Psoas muscle (tissue), 8 donors: ENCODE measurements at regions of chr1 and their contacts with region 1.

Region 1: DNA sequence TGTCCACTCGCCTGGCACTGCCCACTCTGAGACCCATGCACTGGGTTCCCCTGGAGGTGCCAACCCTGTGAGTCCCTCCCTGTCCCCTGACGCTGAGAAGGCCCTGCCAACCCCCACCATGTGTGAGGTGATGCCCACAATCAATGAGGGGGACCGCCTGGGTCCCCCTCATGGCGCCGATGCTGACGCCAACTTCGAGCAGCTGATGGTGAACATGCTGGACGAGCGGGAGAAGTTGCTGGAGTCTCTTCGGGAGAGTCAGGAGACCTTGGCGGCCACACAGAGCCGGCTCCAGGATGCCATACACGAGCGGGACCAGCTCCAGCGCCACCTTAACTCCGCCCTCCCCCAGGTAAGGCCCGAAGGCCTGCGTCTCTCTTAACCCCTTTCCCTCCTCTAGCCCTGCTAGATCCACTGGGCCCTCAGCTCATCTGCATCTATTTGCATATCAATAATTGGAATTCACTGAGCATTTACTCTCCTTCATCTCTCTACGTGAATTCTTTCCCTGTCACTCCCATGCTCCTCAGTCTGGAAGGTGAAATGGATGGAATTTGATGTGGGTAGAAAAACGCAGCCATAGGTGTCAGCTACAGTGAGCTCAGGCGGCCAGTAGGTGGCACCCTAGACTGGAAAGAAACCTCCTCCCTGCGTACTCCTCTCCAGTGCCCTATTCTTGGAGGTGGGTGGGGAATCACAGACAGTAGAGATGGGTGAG is 12.8 kb downstream of the PPFIA4 start:
- DNase-seq: peak; percentile 72 to 89
- ATAC-seq: peak; percentile 59 to 75 (median 62)
- H3K4me3 ChIP-seq: peak overlapping the region; percentile 30
- H3K27ac ChIP-seq: peak overlapping the region; percentile 97
- H3K4me1 ChIP-seq: peaks cover 73% of the 10 kb centered on the region
- H3K27me3 ChIP-seq: no peaks in the 10 kb centered on the region
- CTCF ChIP-seq: peak; percentile 87

Region 2: GRCh38 chr1:203084588-203085502 is 45.8 kb after region 1 on chr1:
- intact Hi-C with region 1: loop called in 1 of 2 experiments (anchors 1 kb)
- DNase-seq: peak; percentile 68 to 87
- ATAC-seq: peak; percentile 58 to 79 (median 70)
- H3K4me3 ChIP-seq: peak overlapping the region; percentile 99
- H3K27ac ChIP-seq: peak overlapping the region; percentile 97
- H3K4me1 ChIP-seq: peaks cover 27% of the 10 kb centered on the region
- H3K27me3 ChIP-seq: no peaks in the 10 kb centered on the region
- CTCF ChIP-seq: peak; percentile 79

Region 3: DNA sequence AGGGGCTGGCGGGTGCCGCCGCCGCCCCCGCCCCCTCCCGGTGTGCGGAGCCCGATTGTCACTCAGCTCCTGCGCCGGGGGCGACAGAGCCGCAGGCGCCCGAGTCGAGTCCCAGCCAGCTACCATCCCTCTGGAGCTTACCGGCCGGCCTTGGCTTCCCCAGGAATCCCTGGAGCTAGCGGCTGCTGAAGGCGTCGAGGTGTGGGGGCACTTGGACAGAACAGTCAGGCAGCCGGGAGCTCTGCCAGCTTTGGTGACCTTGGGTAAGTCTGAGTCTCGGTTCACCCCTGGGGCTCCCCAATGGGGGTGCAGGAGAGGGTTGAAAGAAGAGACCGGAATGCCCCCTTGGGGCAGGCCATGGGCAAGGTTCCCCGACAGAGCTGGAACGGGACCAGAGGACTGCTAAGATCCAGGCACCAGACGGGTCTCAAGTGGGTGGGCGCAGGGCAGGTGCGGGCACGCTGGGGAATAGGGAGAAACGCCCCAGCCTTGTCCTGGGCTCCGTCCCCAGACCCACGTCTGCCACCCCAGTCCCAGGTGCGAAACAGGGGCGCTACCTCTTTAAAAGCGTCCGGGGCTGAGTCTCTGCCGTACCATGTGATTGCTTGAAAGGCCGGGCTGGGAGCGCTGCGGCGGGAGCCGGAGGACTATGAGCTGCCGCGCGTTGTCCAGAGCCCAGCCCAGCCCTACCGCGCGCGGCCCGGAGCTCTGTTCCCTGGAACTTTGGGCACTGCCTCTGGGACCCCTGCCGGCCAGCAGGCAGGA is 88.8 kb after region 1 on chr1 and contains the start of gene ADORA1:
- intact Hi-C with region 1: loop called in 1 of 2 experiments (anchors 2 kb)
- DNase-seq: peak; percentile 64 to 76
- ATAC-seq: peak; percentile 82 to 96 (median 90)
- H3K4me3 ChIP-seq: peak within 1 kb of the TSS; percentile 73
- H3K27ac ChIP-seq: peak within 1 kb of the TSS; percentile 64
- H3K4me1 ChIP-seq: peaks cover 42% of the 10 kb centered on the region
- H3K27me3 ChIP-seq: peaks cover 0 to 8% (median 2%) of the 10 kb centered on the region in 3 donors
- CTCF ChIP-seq: no peak
- total RNA-seq, gene ADORA1: 1.2 to 10.4 (median 6.1) TPM

Region 4: DNA sequence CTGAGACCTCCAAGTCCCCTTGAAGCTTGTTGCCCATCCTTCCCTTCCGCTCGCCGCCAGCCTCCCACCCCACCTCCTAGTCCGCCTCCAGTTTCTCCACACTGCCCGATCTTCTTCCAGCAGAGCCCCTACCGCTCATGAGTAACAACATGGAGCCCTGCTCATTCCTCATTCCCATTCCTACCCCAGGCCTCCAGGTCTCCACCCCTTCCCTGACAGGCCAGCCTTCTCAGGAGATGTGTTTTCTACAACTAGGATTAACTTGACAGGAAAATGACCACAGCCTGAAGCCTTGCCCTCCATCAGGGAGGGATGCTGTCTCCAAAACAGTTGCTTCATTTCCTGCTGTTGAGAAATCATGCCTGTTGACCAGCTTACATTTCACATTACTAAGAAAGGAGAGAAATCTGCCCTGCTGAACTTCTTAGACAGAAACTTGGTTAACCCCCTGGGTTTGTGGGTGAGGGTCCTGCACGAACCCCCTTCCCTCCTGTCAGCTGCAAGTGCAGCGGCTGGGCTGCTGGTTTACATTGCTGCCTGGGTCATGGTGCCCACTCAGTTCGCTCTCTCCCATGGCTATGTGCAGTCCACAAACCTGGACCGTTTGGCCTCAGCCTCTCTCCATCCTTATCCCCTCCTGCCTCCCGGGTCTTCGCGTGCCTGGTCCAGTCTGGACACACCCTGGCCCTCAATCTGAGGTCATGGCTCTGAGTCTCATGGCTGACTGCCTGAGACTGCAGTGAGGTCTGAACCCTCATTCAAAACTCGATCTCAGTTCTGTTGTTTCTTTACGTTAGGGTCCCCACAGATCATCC is 163.6 kb after region 1 on chr1:
- intact Hi-C with region 1: loop called in 1 of 2 experiments (anchors 5 kb)
- DNase-seq: peak; percentile 69 to 71
- ATAC-seq: peak; percentile 62 to 73 (median 68)
- H3K4me3 ChIP-seq: no peak overlapping the region
- H3K27ac ChIP-seq: peak overlapping the region; percentile 83
- H3K4me1 ChIP-seq: peaks cover 45% of the 10 kb centered on the region
- H3K27me3 ChIP-seq: no peaks in the 10 kb centered on the region
- CTCF ChIP-seq: no peak

Region 5: DNA sequence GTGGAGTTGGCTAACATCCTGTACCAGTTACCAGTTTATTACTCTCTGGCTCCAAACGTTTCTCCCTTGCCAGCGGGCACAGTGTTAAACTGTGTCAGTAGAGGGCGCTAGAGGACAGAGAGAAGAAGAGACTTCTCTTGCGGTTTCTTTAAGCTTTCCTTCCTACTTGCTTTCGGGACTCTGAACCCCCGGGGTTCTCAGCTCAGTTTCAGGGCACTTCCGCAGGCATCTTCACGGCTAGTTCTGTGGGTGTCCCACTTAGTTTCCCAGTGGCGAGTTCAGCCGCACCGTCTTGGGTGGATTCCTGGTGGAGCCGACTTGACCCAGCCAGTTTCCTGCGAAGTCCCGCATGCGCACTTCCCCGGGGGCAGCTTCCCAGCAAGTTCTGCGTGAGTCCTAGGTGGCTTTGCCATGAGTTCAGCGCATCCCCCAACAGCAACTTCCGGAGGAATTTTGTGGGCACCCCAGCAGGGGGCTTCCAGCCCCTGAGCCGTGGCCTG is 228.3 kb after region 1 on chr1:
- intact Hi-C with region 1: loop called (anchors 2 to 5 kb)
- DNase-seq: peak; percentile 85 to 91
- ATAC-seq: peak; percentile 75 to 85 (median 80)
- H3K4me3 ChIP-seq: peak overlapping the region; percentile 73
- H3K27ac ChIP-seq: peak overlapping the region; percentile 93
- H3K4me1 ChIP-seq: peaks cover 30% of the 10 kb centered on the region
- H3K27me3 ChIP-seq: no peaks in the 10 kb centered on the region
- CTCF ChIP-seq: peak; percentile 92